ENCODE measurements at regions of chr20 and their contacts with region 1.

Region 1: GRCh38 chr20:21099751-21100577 is 6.2 kb downstream of the LINC00237 start:
- DNase-seq: peak; percentile 39
- H3K4me3 Mint-ChIP-seq: peak overlapping the region; percentile 83
- H3K27ac Mint-ChIP-seq: peak overlapping the region; percentile 93
- H3K4me1 Mint-ChIP-seq: peaks cover 49% of the 10 kb centered on the region
- H3K27me3 Mint-ChIP-seq: peaks cover 70% of the 10 kb centered on the region

Region 2: DNA sequence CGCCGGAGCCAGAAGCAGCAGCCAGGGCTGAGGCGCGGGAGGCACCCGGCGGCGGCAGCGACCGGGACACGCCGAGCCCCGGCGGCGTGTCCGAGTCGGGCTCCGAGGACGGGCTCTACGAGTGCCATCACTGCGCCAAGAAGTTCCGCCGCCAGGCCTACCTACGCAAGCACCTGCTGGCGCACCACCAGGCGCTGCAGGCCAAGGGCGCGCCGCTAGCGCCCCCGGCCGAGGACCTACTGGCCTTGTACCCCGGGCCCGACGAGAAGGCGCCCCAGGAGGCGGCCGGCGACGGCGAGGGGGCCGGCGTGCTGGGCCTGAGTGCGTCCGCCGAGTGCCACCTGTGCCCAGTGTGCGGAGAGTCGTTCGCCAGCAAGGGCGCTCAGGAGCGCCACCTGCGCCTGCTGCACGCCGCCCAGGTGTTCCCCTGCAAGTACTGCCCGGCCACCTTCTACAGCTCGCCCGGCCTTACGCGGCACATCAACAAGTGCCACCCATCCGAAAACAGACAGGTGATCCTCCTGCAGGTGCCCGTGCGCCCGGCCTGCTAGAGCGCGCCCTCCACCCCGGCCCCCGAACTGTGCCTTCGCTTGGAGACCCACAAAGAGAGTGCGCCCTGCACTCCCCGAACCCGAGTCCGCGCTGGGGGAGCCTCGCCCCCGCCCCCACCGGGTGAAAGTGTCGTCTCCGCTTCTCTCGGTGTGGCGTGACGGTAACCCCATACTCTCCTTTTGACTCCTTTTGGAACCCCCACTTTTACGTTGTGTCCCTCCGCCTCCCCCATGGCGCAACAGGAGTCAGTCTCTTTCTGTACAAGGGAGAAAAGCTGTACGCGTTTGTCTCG is 730.5 kb before region 1 on chr20:
- intact Hi-C with region 1: loop called (anchors 2 kb)
- DNase-seq: no peak
- H3K4me3 Mint-ChIP-seq: peak overlapping the region; percentile 88
- H3K27ac Mint-ChIP-seq: peak overlapping the region; percentile 89
- H3K4me1 Mint-ChIP-seq: peaks cover 28% of the 10 kb centered on the region
- H3K27me3 Mint-ChIP-seq: peaks cover 60% of the 10 kb centered on the region

Region 3: DNA sequence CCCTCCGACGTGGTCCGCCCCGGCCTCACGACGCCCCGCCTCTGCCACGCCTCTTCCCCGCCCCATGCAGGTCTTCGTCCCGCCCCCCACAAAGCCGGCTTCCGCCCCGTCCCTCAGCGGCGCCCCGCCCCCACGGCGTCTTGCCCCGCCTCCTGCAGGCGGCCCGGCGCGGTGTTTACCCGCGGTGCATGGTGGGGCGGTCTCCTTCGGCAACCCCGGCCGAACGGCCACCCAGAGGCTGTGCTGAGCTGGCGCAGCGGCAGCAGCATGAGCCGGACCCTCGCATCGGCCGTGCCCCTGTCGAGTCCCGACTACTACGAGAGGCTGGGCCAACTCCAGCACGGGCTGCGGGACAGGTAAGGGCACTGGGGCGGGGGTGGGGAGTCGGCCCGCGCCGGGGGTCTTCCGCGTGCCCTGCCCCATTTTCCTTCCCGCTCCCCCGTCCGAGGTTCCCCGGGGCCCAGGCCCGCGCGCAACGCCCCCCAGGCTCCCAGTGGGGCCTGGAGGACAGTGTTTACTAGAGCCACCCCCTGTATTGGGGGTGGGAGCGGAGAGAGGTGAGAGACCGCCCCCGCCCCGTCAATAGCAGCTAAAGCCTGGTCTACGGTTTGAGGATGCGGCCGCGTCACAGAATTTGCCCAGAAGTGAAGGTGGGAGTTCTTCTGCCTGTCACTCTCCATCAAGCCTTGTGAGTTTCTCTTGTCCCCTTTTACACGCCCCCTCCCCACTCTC is 26.1 kb after region 1 on chr20 and contains the start of gene KIZ:
- intact Hi-C with region 1: loop called (anchors 1 kb)
- DNase-seq: peak; percentile 96
- H3K4me3 Mint-ChIP-seq: peak within 1 kb of the TSS; percentile 82
- H3K27ac Mint-ChIP-seq: peak within 1 kb of the TSS; percentile 79
- H3K4me1 Mint-ChIP-seq: peaks cover 15% of the 10 kb centered on the region
- H3K27me3 Mint-ChIP-seq: peaks cover 3% of the 10 kb centered on the region
- total RNA-seq, gene KIZ: 9.3 and 11.8 TPM in 2 replicates

Region 4: DNA sequence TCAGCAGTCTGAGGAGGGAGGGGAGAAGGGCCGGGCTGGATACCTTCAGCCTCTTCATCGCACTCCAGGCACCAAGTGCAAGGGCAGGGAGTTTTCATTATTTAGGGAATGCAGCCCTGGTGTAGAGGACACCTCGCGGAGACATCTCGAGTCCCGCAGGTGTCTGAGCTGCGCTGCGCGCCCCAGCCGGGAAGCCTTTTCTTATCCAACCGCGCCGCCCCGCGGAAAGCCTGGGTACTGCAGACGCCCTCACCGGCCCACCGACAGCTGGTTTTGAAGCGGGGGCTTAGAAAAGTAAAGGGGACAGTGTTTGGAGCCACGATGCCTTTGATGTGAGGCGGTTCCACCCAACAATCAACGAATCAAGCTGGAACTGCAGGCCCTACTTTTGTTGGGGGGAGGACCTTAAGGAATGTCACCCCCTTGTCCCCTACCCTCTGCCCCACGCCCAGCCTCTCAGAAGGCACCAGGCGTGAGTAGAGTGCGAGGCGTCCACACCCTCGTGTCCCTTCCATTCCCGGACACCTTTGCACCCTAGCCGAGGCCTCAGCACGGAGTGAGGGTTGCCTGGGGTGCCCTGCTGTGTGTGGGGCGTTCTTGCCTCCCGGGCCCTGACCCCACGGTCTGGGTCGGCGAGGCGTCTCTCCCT is 405.3 kb after region 1 on chr20:
- intact Hi-C with region 1: loop called (anchors 2 kb)
- DNase-seq: peak; percentile 60
- H3K4me3 Mint-ChIP-seq: peak overlapping the region; percentile 57
- H3K27ac Mint-ChIP-seq: peak overlapping the region; percentile 63
- H3K4me1 Mint-ChIP-seq: peaks cover 25% of the 10 kb centered on the region
- H3K27me3 Mint-ChIP-seq: peaks cover 51% of the 10 kb centered on the region

Region 5: DNA sequence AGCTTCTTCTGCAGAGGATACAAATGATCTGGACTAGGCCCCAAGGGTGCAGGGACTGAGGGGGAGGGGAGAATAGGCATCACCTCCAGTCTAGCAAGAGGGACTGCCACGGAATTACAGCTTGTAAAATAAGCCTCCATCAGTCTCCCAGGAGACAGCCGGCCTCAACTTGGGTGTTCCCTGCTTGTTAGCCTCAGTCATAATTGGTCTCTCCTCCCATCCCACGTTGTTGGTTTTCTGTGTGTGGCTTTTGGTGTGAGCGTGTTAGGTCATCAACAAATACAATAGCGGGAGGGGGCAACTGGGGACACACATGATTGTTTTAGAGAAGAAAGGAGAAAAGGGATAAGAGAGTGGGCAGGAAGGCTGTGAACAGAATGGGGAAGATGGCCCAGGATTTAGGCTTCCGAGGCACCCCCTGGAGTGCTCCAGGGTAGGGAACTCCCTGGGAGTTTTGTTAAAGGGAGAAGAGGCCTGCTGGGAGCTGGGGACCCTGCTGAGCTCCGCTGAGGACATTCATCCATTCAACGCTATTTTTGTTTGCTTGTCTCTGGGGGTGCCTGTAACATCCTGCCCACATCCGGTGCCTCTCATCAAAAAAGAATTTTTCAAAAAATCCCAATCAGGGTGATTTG is 1475.2 kb after region 1 on chr20:
- intact Hi-C with region 1: loop called (anchors 5 kb)
- DNase-seq: no peak
- H3K4me3 Mint-ChIP-seq: no peak overlapping the region
- H3K27ac Mint-ChIP-seq: no peak overlapping the region
- H3K4me1 Mint-ChIP-seq: no peaks in the 10 kb centered on the region
- H3K27me3 Mint-ChIP-seq: peaks cover 66% of the 10 kb centered on the region